ENCODE measurements at regions of chr7 and their contacts with region 1.

Region 1: GRCh38 chr7:105278973-105279687 is 109.6 kb downstream of the SRPK2 start:
- DNase-seq: peak; percentile 21
- H3K4me3 Mint-ChIP-seq: peak overlapping the region; percentile 58
- H3K27ac Mint-ChIP-seq: peak overlapping the region; percentile 81
- H3K4me1 Mint-ChIP-seq: peaks cover 51% of the 10 kb centered on the region
- H3K27me3 Mint-ChIP-seq: no peaks in the 10 kb centered on the region
- CTCF ChIP-seq: no peak

Region 2: DNA sequence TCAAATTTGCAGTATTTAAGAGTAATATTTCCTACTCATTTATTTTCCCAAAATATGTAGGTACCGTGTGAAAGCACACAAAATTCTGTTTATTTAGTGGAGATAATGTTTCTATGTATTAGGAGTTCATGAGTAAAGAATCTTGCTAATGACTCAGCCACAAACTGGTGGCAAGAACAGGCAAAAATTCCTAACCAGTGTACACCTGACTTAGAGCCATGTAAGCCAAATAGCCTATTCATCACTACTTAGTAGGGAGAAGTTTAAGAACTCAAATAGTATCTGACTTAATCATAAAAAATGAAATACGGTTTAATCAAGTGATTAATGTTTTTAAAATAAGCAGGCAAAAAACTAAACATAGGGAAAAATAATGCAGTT is 59.4 kb before region 1 on chr7:
- CTCF ChIA-PET with region 1: interaction called, 4 read pairs
- intact Hi-C with region 1: loop called (anchors 2 kb)
- DNase-seq: no peak
- H3K4me3 Mint-ChIP-seq: no peak overlapping the region
- H3K27ac Mint-ChIP-seq: peak overlapping the region; percentile 68
- H3K4me1 Mint-ChIP-seq: peaks cover 66% of the 10 kb centered on the region
- H3K27me3 Mint-ChIP-seq: no peaks in the 10 kb centered on the region
- CTCF ChIP-seq: no peak

Region 3: DNA sequence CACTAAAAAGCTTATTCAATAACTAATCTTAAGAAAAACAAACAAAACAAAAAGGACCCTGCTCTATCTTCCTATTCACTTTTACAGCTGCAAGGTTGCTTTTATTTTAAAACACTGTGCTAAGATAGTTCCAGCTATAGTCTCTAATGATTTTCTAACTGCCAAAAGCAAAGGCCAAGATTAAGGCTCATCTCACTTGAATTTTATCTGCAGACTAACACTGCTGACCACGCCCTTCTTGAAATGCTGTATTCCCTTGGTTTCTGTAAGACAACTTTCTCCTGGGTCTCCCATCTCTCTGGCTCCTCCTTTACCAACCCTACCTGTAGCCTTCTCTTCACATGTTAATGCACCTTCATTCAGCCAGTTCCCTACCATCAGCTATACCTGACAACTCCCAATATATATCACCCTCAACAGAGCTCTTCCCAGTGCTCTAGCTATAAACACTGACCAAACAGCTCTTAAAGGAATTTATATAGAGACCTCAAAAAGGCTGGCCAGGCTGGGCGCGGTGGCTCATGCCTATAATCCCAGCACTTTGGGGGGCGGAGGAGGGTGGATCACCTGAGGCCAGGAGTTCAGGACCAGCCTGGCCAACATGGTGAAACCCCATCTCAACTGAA is 97.9 kb after region 1 on chr7:
- CTCF ChIA-PET with region 1: no interaction called
- intact Hi-C with region 1: no loop called
- DNase-seq: no peak
- H3K4me3 Mint-ChIP-seq: no peak overlapping the region
- H3K27ac Mint-ChIP-seq: no peak overlapping the region
- H3K4me1 Mint-ChIP-seq: peaks cover 12% of the 10 kb centered on the region
- H3K27me3 Mint-ChIP-seq: no peaks in the 10 kb centered on the region
- CTCF ChIP-seq: no peak

Measured in Calu3 (cell line).